Dendritic cell treated with granulocyte-macrophage colony-stimulating factor and Interleukin-4, amounts not matched to agents 40 ng/mL and 50 ng/mL, for 4 days (primary cell): ENCODE measurements at regions of chr14 and their contacts with region 1.

Region 1: DNA sequence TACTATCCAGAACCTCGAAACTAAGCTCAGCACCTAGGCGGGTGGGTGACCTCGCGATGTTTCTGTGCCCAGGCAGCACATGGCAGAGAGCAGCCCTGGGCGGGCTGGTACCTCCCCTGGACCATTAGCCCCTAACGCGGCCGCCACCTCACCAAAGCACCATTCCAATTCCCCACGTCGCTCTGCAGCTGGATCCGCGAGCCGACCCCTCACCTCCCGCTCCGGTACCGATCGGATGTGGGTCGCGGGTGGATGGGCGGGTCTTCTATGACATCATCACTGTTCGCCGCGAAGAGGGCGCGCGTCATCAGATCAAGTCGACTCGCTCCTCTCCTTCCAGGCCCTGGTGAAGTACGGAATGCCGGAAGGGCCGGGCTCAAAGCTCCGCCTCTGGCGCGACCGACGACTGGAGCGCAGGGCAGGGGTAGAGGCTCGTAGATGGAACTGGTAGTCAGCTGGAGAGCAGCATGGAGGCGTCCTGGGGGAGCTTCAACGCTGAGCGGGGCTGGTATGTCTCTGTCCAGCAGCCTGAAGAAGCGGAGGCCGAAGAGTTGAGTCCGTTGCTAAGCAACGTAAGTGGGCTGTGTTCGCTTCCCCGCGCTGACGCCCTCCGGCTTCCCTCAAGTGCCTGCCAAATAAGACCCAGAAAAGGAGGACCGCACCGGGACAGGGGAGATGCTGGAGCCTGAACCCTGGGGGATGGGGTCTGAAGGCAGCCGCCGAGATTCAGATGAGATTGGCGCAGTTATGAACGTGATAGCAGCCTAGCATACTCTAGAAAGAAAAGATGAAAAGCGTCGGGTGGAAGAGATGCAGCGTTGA is at the starts of genes SLC38A6 and TRMT5:
- H3K4me3 Mint-ChIP-seq: no peak within 1 kb of the TSS
- H3K27ac Mint-ChIP-seq: no peak within 1 kb of the TSS
- H3K4me1 Mint-ChIP-seq: peaks cover 36% of the 10 kb centered on the region
- H3K27me3 Mint-ChIP-seq: no peaks in the 10 kb centered on the region

Region 2: GRCh38 chr14:60656686-60657455 is 324.2 kb before region 1 on chr14:
- intact Hi-C with region 1: loop called (anchors 5 kb)
- H3K4me3 Mint-ChIP-seq: peak overlapping the region; percentile 82
- H3K27ac Mint-ChIP-seq: peak overlapping the region; percentile 83
- H3K4me1 Mint-ChIP-seq: peaks cover 53% of the 10 kb centered on the region
- H3K27me3 Mint-ChIP-seq: peaks cover 93% of the 10 kb centered on the region

Region 3: DNA sequence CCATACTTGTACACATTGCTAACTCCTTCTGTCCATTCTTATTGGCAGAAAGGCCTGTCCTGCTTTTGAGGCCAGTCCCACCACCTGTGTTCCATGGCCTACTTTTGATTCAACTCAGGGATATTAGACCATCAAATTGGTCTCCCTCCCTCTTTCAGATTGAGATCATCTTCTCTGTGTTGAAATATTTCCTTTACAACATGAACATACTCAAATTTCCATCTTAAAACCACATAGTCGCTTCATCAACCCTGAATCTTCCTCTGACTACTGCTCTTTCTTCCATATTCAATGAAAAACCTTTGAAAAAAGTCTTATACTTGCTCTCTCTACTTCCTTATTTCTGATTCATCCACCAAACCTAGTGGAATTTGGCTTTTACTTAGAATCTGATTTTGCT is 35.0 kb before region 1 on chr14:
- intact Hi-C with region 1: no loop called
- H3K4me3 Mint-ChIP-seq: peak overlapping the region; percentile 37
- H3K27ac Mint-ChIP-seq: peak overlapping the region; percentile 79
- H3K4me1 Mint-ChIP-seq: peaks cover 13% of the 10 kb centered on the region
- H3K27me3 Mint-ChIP-seq: no peaks in the 10 kb centered on the region